ENCODE measurements at regions of chr1 and their contacts with region 1.

Region 1: DNA sequence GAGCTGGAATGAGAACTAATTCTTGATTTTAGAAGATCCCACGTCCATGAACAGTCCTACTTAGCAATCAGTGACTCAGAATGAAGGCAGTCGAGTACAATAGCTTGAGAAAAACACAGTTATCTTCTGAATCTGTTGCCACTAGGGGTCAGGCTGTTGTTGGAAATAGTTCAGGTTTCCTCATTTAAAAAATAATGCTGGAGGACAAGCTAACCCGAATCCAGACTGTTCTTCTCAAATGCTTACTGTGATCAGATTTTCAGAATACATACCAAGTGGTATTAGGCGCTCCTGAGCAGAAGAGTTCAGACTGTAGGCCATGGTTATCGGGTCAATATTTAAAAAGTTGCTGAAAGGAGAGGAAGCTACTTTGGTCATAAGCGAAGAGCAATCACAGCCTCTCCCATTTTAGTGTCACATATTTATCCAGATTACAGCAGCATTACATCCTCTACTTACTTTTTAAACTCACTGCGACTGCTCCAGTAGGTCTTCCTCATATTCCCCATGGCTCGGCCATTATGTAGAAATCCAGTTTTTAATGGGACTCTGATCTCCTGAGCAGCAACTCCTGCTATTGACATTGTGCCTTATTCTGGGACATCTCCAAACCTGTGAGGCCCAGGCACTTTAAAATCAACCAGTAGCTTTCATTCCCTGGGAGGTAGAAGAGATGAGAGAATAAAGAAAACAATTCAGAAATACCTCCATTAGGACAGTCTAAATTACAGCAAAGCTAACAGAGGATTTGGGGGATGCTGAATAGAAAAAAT is 10.9 kb downstream of the ERRFI1 start:
- DNase-seq: peak; percentile 93
- H3K4me3 ChIP-seq: no peak overlapping the region
- H3K27ac ChIP-seq: peak overlapping the region; percentile 54
- H3K4me1 ChIP-seq: peaks cover 52% of the 10 kb centered on the region
- H3K27me3 ChIP-seq: no peaks in the 10 kb centered on the region
- CTCF ChIP-seq: peak; percentile 58 to 62
- POLR2A ChIP-seq: no peak

Region 2: DNA sequence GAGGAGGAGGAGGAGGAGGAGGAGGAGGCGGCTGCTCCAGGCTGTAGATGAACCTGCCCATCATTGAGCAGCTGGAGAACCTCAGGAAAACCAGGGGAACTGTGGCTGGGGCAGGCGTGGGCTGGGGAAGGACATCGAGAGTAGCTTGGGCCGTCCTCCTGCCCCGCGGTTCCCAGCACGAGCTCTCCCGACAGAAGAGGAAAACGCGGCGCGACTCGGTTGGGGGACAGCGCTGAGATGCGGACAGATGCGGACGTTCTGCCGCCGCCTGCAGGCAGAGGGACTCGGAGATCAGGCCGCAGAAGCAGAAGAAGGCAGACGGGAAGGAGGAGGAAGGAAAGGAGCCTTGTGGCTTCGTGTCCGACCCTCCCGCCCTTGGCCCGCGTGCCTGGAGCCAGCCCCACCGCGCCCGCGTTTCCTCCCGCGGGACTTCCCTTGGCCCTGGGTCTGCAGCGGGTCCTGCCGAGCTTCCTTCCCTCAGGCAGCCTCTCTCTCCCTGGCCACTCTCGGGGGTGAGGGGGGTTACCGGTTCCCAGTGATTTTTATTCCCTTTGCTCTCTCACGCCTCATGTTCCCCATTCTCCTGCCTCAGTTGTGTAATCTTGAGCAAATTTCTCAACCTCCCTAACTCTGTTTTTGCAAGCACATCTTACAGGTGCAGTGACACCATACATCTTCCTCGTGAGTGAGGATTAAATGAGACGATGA is 72.9 kb before region 1 on chr1:
- CTCF ChIA-PET with region 1: no interaction called
- POLR2A ChIA-PET with region 1: no interaction called
- dilution Hi-C with region 1: no loop called
- intact Hi-C with region 1: no loop called
- DNase-seq: peak; percentile 48
- H3K4me3 ChIP-seq: no peak overlapping the region
- H3K27ac ChIP-seq: no peak overlapping the region
- H3K4me1 ChIP-seq: peaks cover 5% of the 10 kb centered on the region
- H3K27me3 ChIP-seq: peaks cover 27 to 49% of the 10 kb centered on the region in 2 experiments
- CTCF ChIP-seq: peak in 1 of 2 donors; percentile 59
- POLR2A ChIP-seq: no peak

Region 3: GRCh38 chr1:7983086-7983778 is 32.0 kb before region 1 on chr1:
- CTCF ChIA-PET with region 1: interaction called, 92 read pairs
- POLR2A ChIA-PET with region 1: no interaction called
- dilution Hi-C with region 1: no loop called
- intact Hi-C with region 1: loop called (anchors 2 kb)
- DNase-seq: no peak
- H3K4me3 ChIP-seq: no peak overlapping the region
- H3K27ac ChIP-seq: no peak overlapping the region
- H3K4me1 ChIP-seq: no peaks in the 10 kb centered on the region
- H3K27me3 ChIP-seq: no peaks in the 10 kb centered on the region
- CTCF ChIP-seq: no peak
- POLR2A ChIP-seq: no peak

Region 4: GRCh38 chr1:8026153-8026975 is 11.1 kb after region 1 on chr1 and contains the start of gene ERRFI1:
- CTCF ChIA-PET with region 1: interaction called, 39 read pairs
- POLR2A ChIA-PET with region 1: interaction called, 5 read pairs
- dilution Hi-C with region 1: no loop called
- intact Hi-C with region 1: loop called (anchors 1 kb)
- DNase-seq: peak; percentile 94
- H3K4me3 ChIP-seq: peak within 1 kb of the TSS; percentile 81 to 98 (median 94)
- H3K27ac ChIP-seq: peak within 1 kb of the TSS; percentile 63
- H3K4me1 ChIP-seq: peaks cover 57% of the 10 kb centered on the region
- H3K27me3 ChIP-seq: no peaks in the 10 kb centered on the region
- CTCF ChIP-seq: no peak
- POLR2A ChIP-seq: peak; percentile 99
- total RNA-seq, gene ERRFI1: 28.1 and 31.2 TPM in 2 replicates

Region 5: GRCh38 chr1:8121261-8122170 is 106.3 kb after region 1 on chr1:
- CTCF ChIA-PET with region 1: interaction called, 17 read pairs
- POLR2A ChIA-PET with region 1: interaction called, 4 read pairs
- dilution Hi-C with region 1: no loop called
- intact Hi-C with region 1: no loop called
- DNase-seq: peak; percentile 99
- H3K4me3 ChIP-seq: peak overlapping the region in 1 of 3 experiments; percentile 6
- H3K27ac ChIP-seq: peak overlapping the region; percentile 96
- H3K4me1 ChIP-seq: peaks cover 50% of the 10 kb centered on the region
- H3K27me3 ChIP-seq: no peaks in the 10 kb centered on the region
- CTCF ChIP-seq: no peak
- POLR2A ChIP-seq: peak; percentile 44

Region 6: GRCh38 chr1:8238851-8239305 is 223.7 kb after region 1 on chr1:
- CTCF ChIA-PET with region 1: interaction called, 18 read pairs
- POLR2A ChIA-PET with region 1: no interaction called
- dilution Hi-C with region 1: no loop called
- intact Hi-C with region 1: loop called (anchors 5 kb)
- DNase-seq: peak; percentile 33
- H3K4me3 ChIP-seq: no peak overlapping the region
- H3K27ac ChIP-seq: peak overlapping the region; percentile 36
- H3K4me1 ChIP-seq: peaks cover 25% of the 10 kb centered on the region
- H3K27me3 ChIP-seq: no peaks in the 10 kb centered on the region
- CTCF ChIP-seq: peak; percentile 6 to 21
- POLR2A ChIP-seq: no peak

Region 7: GRCh38 chr1:8348777-8349491 is 333.7 kb after region 1 on chr1:
- CTCF ChIA-PET with region 1: interaction called, 54 read pairs
- POLR2A ChIA-PET with region 1: no interaction called
- dilution Hi-C with region 1: no loop called
- intact Hi-C with region 1: loop called (anchors 1 kb)
- DNase-seq: peak; percentile 48
- H3K4me3 ChIP-seq: no peak overlapping the region
- H3K27ac ChIP-seq: no peak overlapping the region
- H3K4me1 ChIP-seq: peaks cover 16% of the 10 kb centered on the region
- H3K27me3 ChIP-seq: no peaks in the 10 kb centered on the region
- CTCF ChIP-seq: peak; percentile 65 to 84
- POLR2A ChIP-seq: no peak

Measured in endothelial cell of umbilical vein (primary cell).